H1 (cell line): ENCODE measurements at regions of chr7 and their contacts with region 1.

Region 1: GRCh38 chr7:22110227-22110839 is 164.6 kb upstream of the CDCA7L start:
- DNase-seq: peak; percentile 59 to 68
- H3K4me3 ChIP-seq: no peak overlapping the region
- H3K27ac ChIP-seq: no peak overlapping the region
- H3K4me1 ChIP-seq: 0 out of 7 replicates have a peak, but pooled peaks cover 0 to 2% (median 0%) of the 10 kb centered on the region in 4 experiments
- H3K27me3 ChIP-seq: no peaks in the 10 kb centered on the region
- CTCF ChIP-seq: peak; percentile 44 to 94 (median 93)
- EP300 ChIP-seq: no peak
- POLR2A ChIP-seq: no peak
- RAD21 ChIP-seq: peak; percentile 99

Region 2: DNA sequence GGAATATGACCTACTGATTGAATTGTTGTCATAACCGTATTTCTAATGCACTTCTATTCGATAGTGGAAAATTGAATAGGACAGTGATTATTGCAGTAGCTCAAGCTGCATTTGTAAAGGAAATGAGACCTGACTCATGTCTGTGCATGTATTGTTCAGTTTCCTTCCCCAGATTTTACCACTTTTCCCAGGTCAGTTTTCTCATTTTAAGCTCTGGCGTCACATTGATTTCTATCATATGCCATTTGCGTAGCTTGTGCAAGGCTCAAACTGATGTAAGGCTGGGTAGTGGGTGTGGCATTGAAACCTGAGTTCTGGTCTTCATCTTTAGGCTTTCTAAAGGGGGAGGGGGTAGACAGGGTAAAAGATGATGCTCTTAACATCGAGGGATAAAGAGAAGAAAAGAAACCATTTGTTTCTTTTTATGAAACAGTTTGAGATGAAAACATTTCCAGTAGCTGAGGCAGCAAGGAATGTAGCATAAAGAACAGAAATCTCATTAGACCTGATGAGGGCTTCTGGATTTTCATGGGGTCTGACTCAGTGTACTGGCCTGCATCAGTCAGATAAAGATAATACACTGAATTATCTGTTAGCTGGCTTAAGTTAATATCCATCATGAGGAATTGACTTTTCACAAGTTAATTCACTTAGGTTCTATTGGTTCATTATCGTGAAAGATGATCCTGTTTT is 17.6 kb after region 1 on chr7:
- CTCF ChIA-PET with region 1: interaction called, 21 read pairs
- POLR2A ChIA-PET with region 1: no interaction called
- DNase-seq: no peak
- H3K4me3 ChIP-seq: no peak overlapping the region
- H3K27ac ChIP-seq: no peak overlapping the region
- H3K4me1 ChIP-seq: peaks cover 0 to 2% (median 0%) of the 10 kb centered on the region in 4 experiments; a peak in 2 of 7 replicates
- H3K27me3 ChIP-seq: no peaks in the 10 kb centered on the region
- CTCF ChIP-seq: no peak
- EP300 ChIP-seq: no peak
- POLR2A ChIP-seq: no peak
- RAD21 ChIP-seq: no peak

Region 3: GRCh38 chr7:22193450-22193983 is 83.2 kb after region 1 on chr7:
- CTCF ChIA-PET with region 1: interaction called, 17 read pairs
- POLR2A ChIA-PET with region 1: no interaction called
- DNase-seq: peak in 1 of 2 experiments; percentile 59
- H3K4me3 ChIP-seq: peak overlapping the region; percentile 12 to 59 (median 31); a peak in 6 of 8 replicates
- H3K27ac ChIP-seq: no peak overlapping the region
- H3K4me1 ChIP-seq: peaks cover 0 to 22% (median 11%) of the 10 kb centered on the region in 4 experiments; a peak in 4 of 7 replicates
- H3K27me3 ChIP-seq: no peaks in the 10 kb centered on the region
- CTCF ChIP-seq: no peak
- EP300 ChIP-seq: peak in 1 of 2 experiments; percentile 75; a peak in 1 of 3 replicates
- POLR2A ChIP-seq: no peak
- RAD21 ChIP-seq: peak; percentile 15 to 33; a peak in 3 of 4 replicates

Region 4: DNA sequence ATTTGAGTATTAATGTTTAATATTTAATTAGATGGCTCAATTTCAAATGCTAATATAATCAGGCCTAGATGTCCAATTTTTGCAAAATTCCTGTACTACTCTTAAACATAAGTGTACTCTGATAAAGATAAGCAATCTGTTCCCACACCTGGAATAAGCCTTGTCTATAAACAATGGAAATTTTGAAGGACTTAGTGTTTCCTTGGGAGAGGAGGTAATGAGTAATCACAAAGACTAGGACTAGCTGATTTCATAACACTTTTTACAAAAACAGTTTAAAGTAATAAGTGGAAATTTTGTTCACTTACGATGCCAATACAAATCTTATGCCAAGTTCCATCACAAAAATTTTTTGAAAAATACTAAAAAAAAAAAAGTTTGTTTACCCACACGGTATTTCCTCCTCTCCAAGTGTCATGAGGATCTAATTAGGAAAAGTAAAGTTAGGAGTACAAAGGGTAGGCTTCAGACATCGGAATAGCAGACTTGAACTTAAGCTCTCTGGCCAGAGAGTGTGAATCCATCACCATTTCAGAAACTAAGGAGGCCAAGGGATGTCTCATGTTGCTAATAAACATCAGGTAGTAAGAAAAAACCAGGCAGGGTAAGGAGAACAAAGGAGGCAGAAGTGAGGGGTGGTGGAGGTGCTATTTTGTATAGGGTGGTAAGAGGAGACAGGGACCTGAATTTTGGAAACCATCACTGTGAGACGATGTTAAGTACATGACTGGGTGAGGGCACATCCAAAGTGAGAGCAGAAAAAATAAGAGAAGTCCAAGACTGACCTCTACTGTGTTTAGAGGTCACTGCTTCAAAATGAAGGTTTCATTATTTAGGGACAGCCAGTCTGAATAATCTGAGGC is 185.3 kb after region 1 on chr7:
- CTCF ChIA-PET with region 1: interaction called, 27 read pairs
- POLR2A ChIA-PET with region 1: no interaction called
- DNase-seq: no peak
- H3K4me3 ChIP-seq: no peak overlapping the region
- H3K27ac ChIP-seq: no peak overlapping the region
- H3K4me1 ChIP-seq: no peaks in the 10 kb centered on the region
- H3K27me3 ChIP-seq: no peaks in the 10 kb centered on the region
- CTCF ChIP-seq: no peak; a peak in 1 of 4 replicates
- EP300 ChIP-seq: no peak
- POLR2A ChIP-seq: no peak
- RAD21 ChIP-seq: peak; percentile 37 to 53; a peak in 3 of 4 replicates

Region 5: GRCh38 chr7:22452142-22452959 is 342.0 kb after region 1 on chr7:
- CTCF ChIA-PET with region 1: interaction called, 16 read pairs
- POLR2A ChIA-PET with region 1: no interaction called
- DNase-seq: peak; percentile 25 to 92
- H3K4me3 ChIP-seq: peak overlapping the region; percentile 6 to 48 (median 32); a peak in 5 of 8 replicates
- H3K27ac ChIP-seq: no peak overlapping the region
- H3K4me1 ChIP-seq: peaks cover 2 to 6% (median 2%) of the 10 kb centered on the region in 4 experiments; a peak in 5 of 7 replicates
- H3K27me3 ChIP-seq: no peaks in the 10 kb centered on the region
- CTCF ChIP-seq: peak; percentile 66 to 85 (median 76)
- EP300 ChIP-seq: no peak
- POLR2A ChIP-seq: no peak
- RAD21 ChIP-seq: peak; percentile 74 to 77

Region 6: GRCh38 chr7:22481726-22482125 is 371.4 kb after region 1 on chr7:
- CTCF ChIA-PET with region 1: interaction called, 81 read pairs
- POLR2A ChIA-PET with region 1: no interaction called
- DNase-seq: no peak
- H3K4me3 ChIP-seq: no peak overlapping the region
- H3K27ac ChIP-seq: no peak overlapping the region
- H3K4me1 ChIP-seq: no peaks in the 10 kb centered on the region
- H3K27me3 ChIP-seq: no peaks in the 10 kb centered on the region
- CTCF ChIP-seq: no peak
- EP300 ChIP-seq: no peak
- POLR2A ChIP-seq: no peak
- RAD21 ChIP-seq: no peak